Dorsolateral prefrontal cortex (tissue), 120 donors: ENCODE measurements at regions of chr5 and their contacts with region 1.

Region 1: GRCh38 chr5:88680253-88681132 is 202.5 kb downstream of the MEF2C start:
- DNase-seq: peak; percentile 68 to 92 (median 84)
- H3K4me3 ChIP-seq: peak overlapping the region; percentile 53 to 93 (median 80)
- H3K27ac ChIP-seq: peak overlapping the region; percentile 91 to 100 (median 99)
- H3K27me3 ChIP-seq: peaks cover 0 to 27% (median 0%) of the 10 kb centered on the region in 45 donors
- CTCF ChIP-seq: peak in 55 of 56 donors; percentile 77 to 100 (median 96)

Region 2: GRCh38 chr5:87780831-87781760 is 899.4 kb before region 1 on chr5:
- intact Hi-C with region 1: loop called in 1 of 2 experiments (anchors 5 kb)
- DNase-seq: peak; percentile 59 to 93 (median 88)
- H3K4me3 ChIP-seq: peak overlapping the region in 50 of 59 donors; percentile 1 to 47 (median 25)
- H3K27ac ChIP-seq: peak overlapping the region in 58 of 59 donors; percentile 25 to 94 (median 82)
- H3K27me3 ChIP-seq: no peaks in the 10 kb centered on the region
- CTCF ChIP-seq: peak; percentile 85 to 99 (median 96)

Region 3: DNA sequence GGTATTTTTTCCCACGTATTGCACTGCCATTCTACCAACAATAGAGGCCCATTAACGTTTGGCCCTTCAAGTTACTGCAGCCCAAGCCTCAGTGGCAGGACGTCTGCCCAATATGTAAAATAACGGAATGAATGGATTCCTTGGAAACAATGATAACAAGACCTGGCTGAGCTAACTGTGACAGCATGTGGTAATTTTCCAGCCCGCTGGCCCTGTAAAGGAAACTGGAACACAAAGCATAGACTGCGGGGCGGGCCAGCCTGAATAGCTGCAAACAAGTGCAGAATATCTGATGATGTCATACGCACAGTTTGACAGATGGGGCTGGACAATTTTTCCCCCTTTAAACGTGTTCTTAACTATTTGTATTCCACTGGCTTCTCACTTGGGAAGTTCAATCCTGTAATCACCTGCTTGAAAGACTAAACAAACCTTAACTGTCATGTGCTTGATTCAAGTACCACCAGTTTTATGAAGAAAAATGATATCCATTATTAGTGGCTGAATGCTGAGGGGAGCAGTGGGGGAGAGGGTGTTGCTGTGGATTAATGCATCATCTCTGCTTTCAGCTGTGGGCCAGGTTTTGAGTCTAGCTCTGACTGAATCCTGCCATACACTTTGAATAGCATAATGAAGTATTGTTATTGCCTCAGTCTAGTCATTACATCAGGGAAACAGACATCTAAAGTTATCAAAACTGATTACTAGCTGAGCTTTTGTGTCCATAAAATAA is 735.8 kb before region 1 on chr5:
- intact Hi-C with region 1: loop called in 1 of 2 experiments (anchors 10 kb)
- DNase-seq: peak; percentile 73 to 96 (median 90)
- H3K4me3 ChIP-seq: peak overlapping the region in 4 of 59 donors; percentile 4 to 17 (median 7)
- H3K27ac ChIP-seq: peak overlapping the region in 55 of 59 donors; percentile 7 to 86 (median 68)
- H3K27me3 ChIP-seq: no peaks in the 10 kb centered on the region
- CTCF ChIP-seq: peak in 14 of 56 donors; percentile 4 to 36 (median 18)

Region 4: DNA sequence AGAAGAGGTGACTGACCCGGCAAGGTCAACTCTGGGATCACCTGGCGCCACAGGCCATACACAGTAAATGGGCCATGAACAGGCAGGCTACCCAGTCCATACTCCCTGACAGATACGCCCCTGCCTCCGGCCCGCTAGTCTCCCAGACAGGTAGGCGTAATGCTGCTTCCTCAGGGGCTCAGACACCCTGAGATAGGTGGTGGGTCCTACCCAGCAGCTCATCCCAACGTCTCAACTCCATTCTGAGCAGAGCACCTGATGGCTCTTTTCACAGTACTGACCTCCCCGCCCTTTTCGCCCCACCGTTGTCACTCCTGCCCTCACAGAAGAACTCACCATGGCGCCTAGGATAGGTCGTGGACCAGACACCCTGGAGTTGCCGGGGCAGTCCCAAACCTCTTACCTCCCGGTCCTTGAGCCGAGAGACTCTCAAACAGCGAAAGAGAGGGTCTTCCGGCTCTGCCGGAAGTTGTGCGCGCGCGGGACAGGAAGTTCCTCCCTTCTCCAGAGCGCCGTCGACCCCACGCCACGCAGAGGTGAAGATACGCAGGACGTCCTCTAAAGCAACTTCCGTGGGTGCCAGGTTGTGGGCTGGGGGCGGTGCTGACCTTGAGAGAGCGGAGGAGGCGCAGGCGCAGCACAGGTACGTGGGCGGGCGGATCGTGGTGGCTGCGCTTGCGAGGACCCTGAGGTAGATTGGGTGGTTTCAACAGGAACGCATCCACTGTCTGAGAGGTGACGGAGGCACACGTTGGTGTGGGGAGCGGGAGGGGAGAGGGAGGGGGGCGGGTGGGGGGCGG is 411.9 kb before region 1 on chr5 and contains the start of gene TMEM161B:
- intact Hi-C with region 1: loop called in 1 of 2 experiments (anchors 10 kb)
- DNase-seq: peak; percentile 69 to 91 (median 88)
- H3K4me3 ChIP-seq: peak within 1 kb of the TSS; percentile 64 to 98 (median 91)
- H3K27ac ChIP-seq: peak within 1 kb of the TSS in 46 of 59 donors; percentile 6 to 89 (median 58)
- H3K27me3 ChIP-seq: no peaks in the 10 kb centered on the region
- CTCF ChIP-seq: peak in 11 of 56 donors; percentile 5 to 28 (median 15)
- total RNA-seq, gene TMEM161B: 20.0 to 41.1 (median 28.6) TPM

Region 5: GRCh38 chr5:88660947-88661805 is 19.3 kb before region 1 on chr5:
- intact Hi-C with region 1: loop called in 1 of 2 experiments (anchors 2 kb)
- DNase-seq: peak; percentile 96 to 99 (median 98)
- H3K4me3 ChIP-seq: peak overlapping the region; percentile 45 to 93 (median 64)
- H3K27ac ChIP-seq: peak overlapping the region; percentile 43 to 100 (median 98)
- H3K27me3 ChIP-seq: peaks cover 0 to 21% (median 0%) of the 10 kb centered on the region in 45 donors
- CTCF ChIP-seq: peak in 34 of 56 donors; percentile 6 to 53 (median 26)